PC-3 (cell line): ENCODE measurements at regions of chr3 and their contacts with region 1.

Region 1: GRCh38 chr3:197256836-197257444 is 41.5 kb downstream of the DLG1 start:
- DNase-seq: peak; percentile 75
- ATAC-seq: peak; percentile 46; the same call in 1 of the 2 replicates
- H3K4me3 ChIP-seq: no peak overlapping the region
- H3K27ac ChIP-seq: no peak overlapping the region
- H3K4me1 ChIP-seq: no peaks in the 10 kb centered on the region
- H3K27me3 ChIP-seq: no peaks in the 10 kb centered on the region
- CTCF ChIP-seq: peak; percentile 85

Region 2: GRCh38 chr3:197289726-197290125 is 32.8 kb after region 1 on chr3:
- CTCF ChIA-PET with region 1: no interaction called
- POLR2A ChIA-PET with region 1: no interaction called
- intact Hi-C with region 1: loop called (anchors 2 kb)
- DNase-seq: peak; percentile 52
- ATAC-seq: peak; percentile 79
- H3K4me3 ChIP-seq: no peak overlapping the region
- H3K27ac ChIP-seq: peak overlapping the region; percentile 28
- H3K4me1 ChIP-seq: peaks cover 36% of the 10 kb centered on the region
- H3K27me3 ChIP-seq: no peaks in the 10 kb centered on the region
- CTCF ChIP-seq: no peak

Region 3: DNA sequence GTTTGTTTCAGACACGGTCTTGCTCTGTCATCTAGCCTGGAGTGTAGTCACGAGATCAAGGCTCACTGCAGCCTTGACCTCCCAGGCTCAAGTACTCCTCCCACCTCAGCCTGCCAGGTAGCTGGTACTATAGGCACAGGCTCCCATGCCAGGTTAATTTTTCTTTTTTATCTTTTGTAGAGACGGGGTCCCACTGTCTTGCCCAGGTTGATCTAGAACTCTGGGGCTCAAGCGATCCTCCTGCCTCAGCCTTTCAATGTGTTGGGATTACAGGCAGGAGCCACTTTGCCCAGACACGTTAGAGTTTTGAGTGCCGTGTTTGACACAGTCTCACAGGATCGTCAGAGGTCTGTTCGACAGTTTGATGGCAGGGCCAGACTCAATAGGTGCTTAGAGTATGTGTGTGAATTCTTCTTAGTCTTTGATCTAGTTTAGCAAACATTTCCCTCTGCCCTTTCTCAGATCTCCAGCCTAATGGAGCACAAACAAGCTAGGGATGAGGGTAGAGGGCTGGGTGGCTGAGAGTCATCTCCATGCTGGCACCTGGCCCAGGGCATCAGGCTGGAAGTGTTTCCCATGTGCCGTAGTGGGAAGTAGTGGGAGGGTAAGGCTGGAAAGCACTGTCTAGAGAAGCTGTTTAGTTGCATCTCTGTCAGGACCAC is 107.6 kb after region 1 on chr3:
- CTCF ChIA-PET with region 1: no interaction called
- POLR2A ChIA-PET with region 1: no interaction called
- intact Hi-C with region 1: no loop called
- DNase-seq: peak; percentile 27
- ATAC-seq: no peak
- H3K4me3 ChIP-seq: no peak overlapping the region
- H3K27ac ChIP-seq: no peak overlapping the region
- H3K4me1 ChIP-seq: peaks cover 43% of the 10 kb centered on the region
- H3K27me3 ChIP-seq: no peaks in the 10 kb centered on the region
- CTCF ChIP-seq: no peak

Region 4: GRCh38 chr3:197511130-197511529 is 254.2 kb after region 1 on chr3:
- CTCF ChIA-PET with region 1: no interaction called
- POLR2A ChIA-PET with region 1: no interaction called
- intact Hi-C with region 1: loop called (anchors 1 kb)
- DNase-seq: peak; percentile 44
- ATAC-seq: peak; percentile 66
- H3K4me3 ChIP-seq: no peak overlapping the region
- H3K27ac ChIP-seq: no peak overlapping the region
- H3K4me1 ChIP-seq: peaks cover 34% of the 10 kb centered on the region
- H3K27me3 ChIP-seq: no peaks in the 10 kb centered on the region
- CTCF ChIP-seq: no peak